Activated CD8-positive, alpha-beta T cell treated with anti-CD3 and anti-CD28 coated beads for 36 hours (primary cell): ENCODE measurements at regions of chr17 and their contacts with region 1.

Region 1: GRCh38 chr17:47315451-47316266 is 8.1 kb upstream of the EFCAB13 start:
- DNase-seq: peak; percentile 44
- ATAC-seq: peak; percentile 91
- H3K4me3 Mint-ChIP-seq: no peak overlapping the region
- H3K27ac Mint-ChIP-seq: no peak overlapping the region
- H3K4me1 Mint-ChIP-seq: no peaks in the 10 kb centered on the region
- H3K27me3 Mint-ChIP-seq: no peaks in the 10 kb centered on the region
- CTCF ChIP-seq: peak; percentile 89

Region 2: GRCh38 chr17:46889992-46890564 is 425.6 kb before region 1 on chr17:
- CTCF ChIA-PET with region 1: no interaction called
- POLR2A ChIA-PET with region 1: no interaction called
- intact Hi-C with region 1: no loop called
- DNase-seq: no peak
- ATAC-seq: no peak
- H3K4me3 Mint-ChIP-seq: no peak overlapping the region
- H3K27ac Mint-ChIP-seq: no peak overlapping the region
- H3K4me1 Mint-ChIP-seq: no peaks in the 10 kb centered on the region
- H3K27me3 Mint-ChIP-seq: no peaks in the 10 kb centered on the region
- CTCF ChIP-seq: no peak

Region 3: GRCh38 chr17:47229535-47230443 is 85.9 kb before region 1 on chr17:
- CTCF ChIA-PET with region 1: interaction called, 31 read pairs
- POLR2A ChIA-PET with region 1: no interaction called
- intact Hi-C with region 1: loop called (anchors 2 kb)
- DNase-seq: peak; percentile 91
- ATAC-seq: peak; percentile 94
- H3K4me3 Mint-ChIP-seq: peak overlapping the region; percentile 54
- H3K27ac Mint-ChIP-seq: peak overlapping the region; percentile 60
- H3K4me1 Mint-ChIP-seq: peaks cover 10% of the 10 kb centered on the region
- H3K27me3 Mint-ChIP-seq: peaks cover 7% of the 10 kb centered on the region
- CTCF ChIP-seq: peak; percentile 99

Region 4: GRCh38 chr17:47235506-47235905 is 80.2 kb before region 1 on chr17:
- CTCF ChIA-PET with region 1: interaction called, 31 read pairs
- POLR2A ChIA-PET with region 1: no interaction called
- intact Hi-C with region 1: loop called (anchors 2 kb)
- DNase-seq: no peak
- ATAC-seq: no peak
- H3K4me3 Mint-ChIP-seq: no peak overlapping the region
- H3K27ac Mint-ChIP-seq: no peak overlapping the region
- H3K4me1 Mint-ChIP-seq: no peaks in the 10 kb centered on the region
- H3K27me3 Mint-ChIP-seq: peaks cover 2% of the 10 kb centered on the region
- CTCF ChIP-seq: no peak

Region 5: GRCh38 chr17:47305302-47305923 is 10.2 kb before region 1 on chr17:
- CTCF ChIA-PET with region 1: interaction called, 13 read pairs
- POLR2A ChIA-PET with region 1: no interaction called
- intact Hi-C with region 1: no loop called
- DNase-seq: peak; percentile 12
- ATAC-seq: peak; percentile 53
- H3K4me3 Mint-ChIP-seq: no peak overlapping the region
- H3K27ac Mint-ChIP-seq: no peak overlapping the region
- H3K4me1 Mint-ChIP-seq: peaks cover 13% of the 10 kb centered on the region
- H3K27me3 Mint-ChIP-seq: no peaks in the 10 kb centered on the region
- CTCF ChIP-seq: no peak

Region 6: DNA sequence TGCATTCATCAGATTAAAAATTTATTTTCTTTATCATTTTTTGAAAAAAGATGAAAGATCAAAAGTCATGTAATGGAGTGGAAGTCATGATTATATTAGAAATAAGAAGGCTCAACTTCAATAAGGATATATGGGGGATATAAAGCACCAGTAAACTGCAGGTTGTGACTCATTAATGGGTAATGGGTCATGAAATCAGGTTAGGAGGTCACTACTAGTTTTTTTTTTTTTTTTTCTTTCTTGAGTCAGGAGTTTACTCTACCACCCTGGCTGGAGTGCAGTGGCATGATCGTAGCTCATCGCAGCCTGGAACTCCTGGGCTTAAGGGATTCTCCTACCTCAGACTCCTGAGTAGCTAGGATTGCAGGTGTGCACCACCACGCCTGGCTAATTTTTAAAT is 22.4 kb after region 1 on chr17:
- CTCF ChIA-PET with region 1: no interaction called
- POLR2A ChIA-PET with region 1: no interaction called
- intact Hi-C with region 1: no loop called
- DNase-seq: no peak
- ATAC-seq: no peak
- H3K4me3 Mint-ChIP-seq: no peak overlapping the region
- H3K27ac Mint-ChIP-seq: no peak overlapping the region
- H3K4me1 Mint-ChIP-seq: no peaks in the 10 kb centered on the region
- H3K27me3 Mint-ChIP-seq: no peaks in the 10 kb centered on the region
- CTCF ChIP-seq: no peak